HepG2 (cell line): ENCODE measurements at regions of chr6 and their contacts with region 1.

Region 1: GRCh38 chr6:37324131-37325033 is 29.4 kb upstream of the RNF8 start:
- DNase-seq: no peak
- ATAC-seq: no peak
- H3K4me3 ChIP-seq: no peak overlapping the region
- H3K27ac ChIP-seq: peak overlapping the region; percentile 94
- H3K4me1 ChIP-seq: peaks cover 47% of the 10 kb centered on the region
- H3K27me3 ChIP-seq: no peaks in the 10 kb centered on the region
- CTCF ChIP-seq: no peak
- EP300 ChIP-seq: no peak
- POLR2A ChIP-seq: no peak
- RAD21 ChIP-seq: no peak

Region 2: GRCh38 chr6:37381579-37381978 is 57.2 kb after region 1 on chr6:
- CTCF ChIA-PET with region 1: interaction called, 25 read pairs
- POLR2A ChIA-PET with region 1: interaction called, 3 read pairs
- in situ Hi-C with region 1: no loop called
- intact Hi-C with region 1: loop called (anchors 2 kb)
- DNase-seq: peak; percentile 86
- ATAC-seq: peak; percentile 96
- H3K4me3 ChIP-seq: no peak overlapping the region
- H3K27ac ChIP-seq: no peak overlapping the region
- H3K4me1 ChIP-seq: no peaks in the 10 kb centered on the region
- H3K27me3 ChIP-seq: no peaks in the 10 kb centered on the region
- CTCF ChIP-seq: peak; percentile 79
- EP300 ChIP-seq: no peak
- POLR2A ChIP-seq: no peak
- RAD21 ChIP-seq: peak; percentile 77

Region 3: DNA sequence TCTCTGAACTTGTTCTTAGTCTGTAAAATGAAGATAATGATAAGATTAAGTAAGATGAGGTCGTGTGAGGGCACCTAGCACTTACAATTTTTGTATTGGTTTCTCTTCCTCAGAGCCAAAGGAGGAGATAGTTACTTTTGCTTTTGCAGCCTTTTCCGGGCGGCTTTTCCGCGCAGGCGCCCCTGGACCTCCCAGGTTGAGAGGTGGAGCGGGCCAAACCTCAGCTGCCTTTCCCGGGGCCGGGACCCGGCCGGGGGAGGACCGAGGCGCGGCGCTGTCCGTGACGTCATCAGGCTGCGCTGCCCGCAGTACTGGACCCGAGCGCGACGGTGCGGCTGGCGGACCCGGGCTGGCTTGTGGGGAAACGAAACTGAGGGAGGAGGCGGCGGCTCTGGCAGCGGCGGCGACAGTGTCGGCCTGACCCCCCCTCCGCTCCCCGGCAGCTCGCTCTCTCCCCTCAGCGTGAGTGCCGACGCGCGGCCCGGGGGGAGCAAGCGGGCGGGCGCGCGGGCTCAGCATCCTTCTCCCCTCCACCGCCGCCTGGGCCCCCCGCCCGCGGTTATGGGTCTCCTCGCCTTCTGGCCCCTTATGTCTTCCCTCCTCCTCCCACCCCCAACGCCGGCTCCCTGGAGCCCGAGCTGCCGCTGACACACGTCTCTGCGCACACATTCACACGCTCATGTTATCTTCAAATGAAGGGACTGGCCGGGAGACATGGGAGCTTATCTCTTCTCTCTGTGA is 108.7 kb after region 1 on chr6 and contains the start of gene CMTR1:
- CTCF ChIA-PET with region 1: no interaction called
- POLR2A ChIA-PET with region 1: no interaction called
- in situ Hi-C with region 1: no loop called
- intact Hi-C with region 1: loop called (anchors 5 kb)
- DNase-seq: peak; percentile 85
- ATAC-seq: peak; percentile 98
- H3K4me3 ChIP-seq: peak within 1 kb of the TSS; percentile 87 to 98 (median 90)
- H3K27ac ChIP-seq: peak within 1 kb of the TSS; percentile 67
- H3K4me1 ChIP-seq: peaks cover 23% of the 10 kb centered on the region
- H3K27me3 ChIP-seq: no peaks in the 10 kb centered on the region; a peak in 1 of 5 replicates
- CTCF ChIP-seq: peak; percentile 47
- EP300 ChIP-seq: peak; percentile 4 to 56; a peak in 1 of 4 replicates
- POLR2A ChIP-seq: peak; percentile 90
- RAD21 ChIP-seq: peak; percentile 47
- total RNA-seq, gene CMTR1: 33.0 and 55.2 TPM in 2 replicates

Region 4: DNA sequence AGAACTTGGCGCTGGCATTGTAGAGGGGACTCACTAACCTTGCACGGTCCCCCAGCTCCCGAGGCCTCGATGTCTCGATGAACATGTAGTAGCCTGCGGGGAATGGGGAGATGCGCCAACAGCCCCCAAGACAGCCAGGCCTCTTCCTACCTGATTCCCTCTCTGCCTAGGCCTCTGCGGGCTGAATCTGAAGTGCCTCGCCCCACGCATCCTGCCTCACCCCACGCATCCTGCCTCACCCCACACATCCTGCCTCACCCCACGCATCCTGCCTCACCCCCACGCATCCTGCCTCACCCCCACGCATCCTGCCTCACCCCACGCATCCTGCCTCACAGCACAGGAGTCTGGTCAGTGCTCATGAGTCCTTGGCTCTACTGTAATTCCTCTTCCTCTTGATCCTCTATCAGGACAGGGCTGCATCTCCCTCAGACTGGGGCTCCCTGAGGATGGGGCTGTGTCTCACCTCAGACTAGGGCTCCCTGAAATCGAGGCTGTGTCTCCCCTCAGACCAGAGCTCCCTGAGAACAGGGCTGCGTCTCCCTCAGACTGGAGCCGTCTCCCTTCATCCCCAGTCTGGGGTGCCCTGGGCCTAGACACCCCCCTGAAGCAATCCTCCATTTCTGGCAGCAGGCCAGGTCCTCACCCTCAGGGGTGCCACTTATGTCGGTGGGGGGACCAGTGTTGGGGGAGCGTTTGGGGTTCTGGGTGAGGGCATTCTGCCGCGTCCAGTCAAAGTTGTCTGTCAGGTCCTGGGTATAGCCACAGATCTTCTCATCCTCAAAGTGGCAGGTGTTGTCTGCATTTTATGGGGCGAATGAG is 319.7 kb after region 1 on chr6:
- CTCF ChIA-PET with region 1: no interaction called
- POLR2A ChIA-PET with region 1: no interaction called
- in situ Hi-C with region 1: no loop called
- intact Hi-C with region 1: no loop called
- DNase-seq: no peak
- ATAC-seq: no peak
- H3K4me3 ChIP-seq: no peak overlapping the region
- H3K27ac ChIP-seq: no peak overlapping the region
- H3K4me1 ChIP-seq: no peaks in the 10 kb centered on the region
- H3K27me3 ChIP-seq: peaks cover 8 to 39% of the 10 kb centered on the region in 2 experiments
- CTCF ChIP-seq: no peak
- EP300 ChIP-seq: no peak
- POLR2A ChIP-seq: no peak
- RAD21 ChIP-seq: no peak